ENCODE measurements at regions of chr6 and their contacts with region 1.

Region 1: DNA sequence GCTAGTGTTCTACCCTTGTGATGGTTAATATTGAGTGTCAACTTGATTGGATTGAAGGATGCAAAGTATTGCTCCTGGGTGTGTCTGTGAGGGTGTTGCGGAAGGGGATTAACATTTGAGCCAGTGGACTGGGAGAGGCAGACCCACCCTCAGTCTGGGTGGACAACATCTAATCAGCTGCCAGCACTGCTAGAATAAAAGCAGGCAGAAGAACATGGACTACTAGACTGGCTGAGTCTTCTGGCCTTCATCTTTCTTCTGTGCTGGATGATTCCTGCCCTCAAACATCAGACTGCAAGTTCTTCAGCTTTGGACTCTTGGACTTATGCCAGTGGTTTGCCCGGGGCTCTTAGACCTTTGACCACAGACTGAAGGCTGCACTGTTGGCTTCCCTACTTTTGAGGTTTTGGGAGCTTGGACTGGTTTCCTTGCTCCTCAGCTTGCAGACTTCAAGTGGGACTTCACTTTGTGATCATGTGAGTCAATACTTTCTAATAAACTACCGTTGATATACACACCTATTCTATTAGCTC is 50.1 kb downstream of the SDHAF4 start:
- DNase-seq: no peak
- H3K4me3 ChIP-seq: no peak overlapping the region
- CTCF ChIP-seq: no peak
- POLR2A ChIP-seq: no peak

Region 2: GRCh38 chr6:70563530-70563929 is 53.3 kb before region 1 on chr6:
- intact Hi-C with region 1: no loop called
- DNase-seq: no peak
- H3K4me3 ChIP-seq: no peak overlapping the region
- CTCF ChIP-seq: no peak
- POLR2A ChIP-seq: no peak

Region 3: DNA sequence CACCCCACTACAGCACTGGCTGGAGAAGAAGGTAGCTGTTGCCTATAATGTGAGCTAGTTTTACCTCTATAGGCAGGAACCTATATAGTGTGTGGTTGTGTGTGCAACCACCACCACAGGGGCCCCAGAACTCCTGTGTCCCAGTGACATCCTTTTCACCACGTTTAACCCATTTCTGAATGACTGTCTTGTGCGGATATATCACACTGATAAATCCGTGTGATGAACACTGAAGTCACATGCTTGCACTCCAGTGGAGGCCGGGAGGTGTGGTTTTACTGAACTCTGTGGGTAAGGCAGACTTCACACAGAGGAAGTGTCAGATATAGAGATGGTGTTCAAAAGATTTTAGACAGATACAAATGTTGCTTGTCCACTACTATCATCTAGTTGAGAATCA is 17.6 kb before region 1 on chr6:
- intact Hi-C with region 1: loop called (anchors 1 kb)
- DNase-seq: no peak
- H3K4me3 ChIP-seq: no peak overlapping the region
- CTCF ChIP-seq: no peak
- POLR2A ChIP-seq: no peak

Region 4: GRCh38 chr6:71533939-71534379 is 917.2 kb after region 1 on chr6:
- intact Hi-C with region 1: no loop called
- DNase-seq: no peak
- H3K4me3 ChIP-seq: no peak overlapping the region
- CTCF ChIP-seq: no peak
- POLR2A ChIP-seq: no peak

Measured in lower leg skin (tissue), 4 donors.